Heart left ventricle (tissue), 16 donors: ENCODE measurements at regions of chr11 and their contacts with region 1.

Region 1: DNA sequence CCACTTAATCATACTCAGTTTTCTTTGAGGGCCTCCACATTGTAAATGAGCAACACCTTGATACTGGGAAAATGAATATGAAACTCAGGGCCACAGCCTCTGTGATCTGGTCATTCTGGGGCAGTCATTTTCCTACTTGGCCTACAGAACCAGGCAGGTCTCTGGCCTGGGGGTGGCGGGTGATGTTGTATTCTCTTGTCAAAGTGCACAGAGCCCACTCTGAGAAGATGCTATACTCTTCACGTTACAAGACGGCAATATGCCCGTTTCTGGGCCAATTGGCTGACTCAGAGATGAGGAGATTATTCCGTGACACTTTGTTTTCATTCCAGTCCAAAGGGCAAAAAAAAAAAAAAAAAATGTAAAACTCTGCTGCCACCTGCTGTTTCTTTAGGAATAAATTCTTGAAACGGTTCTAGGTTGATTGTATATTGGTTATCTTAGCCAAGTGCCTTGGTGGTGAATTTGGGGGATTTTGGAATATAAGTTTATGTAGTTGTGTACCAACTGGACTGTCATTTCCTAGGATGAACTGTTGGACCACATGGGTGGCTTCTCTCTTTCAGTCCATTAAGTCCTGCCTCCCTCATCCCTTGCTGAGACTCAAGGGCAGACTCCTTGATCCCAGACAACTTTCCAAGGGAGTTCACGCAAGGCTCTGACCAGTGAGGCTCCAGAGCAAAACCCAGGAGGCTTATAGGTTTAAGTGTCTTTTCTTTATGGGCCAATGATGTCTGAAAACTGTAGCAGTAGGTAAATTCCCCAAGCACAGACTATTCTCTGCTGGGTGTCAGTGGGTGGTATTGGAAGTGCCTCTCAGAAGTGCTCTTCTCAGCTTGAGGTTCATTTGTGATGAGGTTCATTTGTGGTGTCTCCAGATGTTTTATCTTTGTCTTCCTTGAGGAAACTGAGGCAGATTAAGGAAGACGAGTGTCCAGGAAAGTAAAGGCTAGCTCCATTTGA is 18.2 kb downstream of the ADM start:
- DNase-seq: peak in 2 of 5 donors; percentile 30 to 43
- ATAC-seq: peak; percentile 34 to 50 (median 38)
- H3K4me3 ChIP-seq: no peak overlapping the region
- H3K27ac ChIP-seq: peak overlapping the region in 4 of 12 donors; percentile 15 to 50 (median 24)
- H3K4me1 ChIP-seq: peaks cover 0 to 50% (median 26%) of the 10 kb centered on the region in 12 donors
- H3K27me3 ChIP-seq: no peaks in the 10 kb centered on the region
- CTCF ChIP-seq: peak; percentile 31 to 70 (median 55)
- POLR2A ChIP-seq: no peak

Region 2: GRCh38 chr11:9015677-9016076 is 1307.4 kb before region 1 on chr11:
- intact Hi-C with region 1: loop called in 1 of 10 experiments (anchors 10 kb)
- DNase-seq: peak in 4 of 5 donors; percentile 48 to 61 (median 56)
- ATAC-seq: peak; percentile 41 to 83 (median 64)
- H3K4me3 ChIP-seq: no peak overlapping the region
- H3K27ac ChIP-seq: no peak overlapping the region
- H3K4me1 ChIP-seq: peaks cover 0 to 28% (median 17%) of the 10 kb centered on the region in 12 donors
- H3K27me3 ChIP-seq: no peaks in the 10 kb centered on the region
- CTCF ChIP-seq: peak; percentile 55 to 83 (median 74)
- POLR2A ChIP-seq: no peak

Region 3: GRCh38 chr11:9613118-9613829 is 709.8 kb before region 1 on chr11:
- intact Hi-C with region 1: loop called in 2 of 10 experiments (anchors 10 kb)
- DNase-seq: peak; percentile 94 to 96 (median 95)
- ATAC-seq: peak; percentile 92 to 94 (median 94)
- H3K4me3 ChIP-seq: peak overlapping the region; percentile 16 to 69 (median 54)
- H3K27ac ChIP-seq: peak overlapping the region; percentile 95 to 100 (median 97)
- H3K4me1 ChIP-seq: peaks cover 0 to 28% (median 17%) of the 10 kb centered on the region in 12 donors
- H3K27me3 ChIP-seq: no peaks in the 10 kb centered on the region
- CTCF ChIP-seq: peak in 11 of 12 donors; percentile 91 to 99 (median 97)
- POLR2A ChIP-seq: peak in 1 of 2 donors; percentile 40

Region 4: DNA sequence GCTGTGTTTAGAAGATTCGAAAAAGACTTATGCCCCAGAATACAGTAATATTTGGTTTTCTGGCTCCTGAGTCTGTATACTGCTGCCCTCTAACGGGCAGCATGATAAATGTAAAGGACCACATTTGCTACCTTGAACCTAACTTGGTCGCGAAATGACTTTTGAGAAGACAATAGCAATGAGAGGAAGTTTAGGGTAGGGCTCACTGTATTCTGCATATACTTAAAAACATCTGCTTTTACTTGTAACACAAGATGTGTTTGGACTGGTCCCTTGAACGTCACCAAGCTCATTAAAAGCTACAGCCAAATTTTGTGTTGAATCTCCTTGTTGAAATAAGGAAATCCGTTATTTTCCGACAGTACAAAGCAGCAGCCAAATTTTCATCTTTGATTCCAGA is 350.1 kb before region 1 on chr11:
- intact Hi-C with region 1: loop called in 2 of 10 experiments (anchors 5 kb)
- DNase-seq: no peak
- ATAC-seq: peak; percentile 55 to 83 (median 68)
- H3K4me3 ChIP-seq: no peak overlapping the region
- H3K27ac ChIP-seq: no peak overlapping the region
- H3K4me1 ChIP-seq: peaks cover 0 to 21% (median 9%) of the 10 kb centered on the region in 12 donors
- H3K27me3 ChIP-seq: no peaks in the 10 kb centered on the region
- CTCF ChIP-seq: peak; percentile 50 to 83 (median 70)
- POLR2A ChIP-seq: no peak

Region 5: DNA sequence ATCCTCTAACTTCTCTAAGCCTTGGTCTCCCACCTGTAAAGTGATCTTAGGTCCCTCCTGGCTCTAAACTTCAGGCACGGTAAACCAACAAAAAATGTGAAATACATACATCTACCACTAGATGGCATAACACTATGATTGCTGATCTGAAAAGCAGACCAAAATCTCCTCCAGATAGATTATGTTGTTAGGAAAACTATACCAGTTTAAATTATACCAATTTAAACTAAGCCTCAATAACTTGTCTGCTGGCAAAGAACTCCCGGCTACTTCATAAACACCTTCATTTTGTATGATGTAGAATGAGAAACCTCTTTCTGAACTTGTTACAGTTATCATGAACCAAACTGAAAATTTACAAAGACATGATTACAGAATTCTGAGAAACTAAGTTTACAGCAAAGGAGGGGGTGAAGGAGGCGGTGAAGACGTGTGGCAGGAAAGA is 115.0 kb before region 1 on chr11:
- intact Hi-C with region 1: loop called in 1 of 10 experiments (anchors 5 kb)
- DNase-seq: no peak
- ATAC-seq: peak in 2 of 4 donors; percentile 46 to 54
- H3K4me3 ChIP-seq: no peak overlapping the region
- H3K27ac ChIP-seq: no peak overlapping the region
- H3K4me1 ChIP-seq: peaks cover 0 to 12% (median 3%) of the 10 kb centered on the region in 12 donors
- H3K27me3 ChIP-seq: no peaks in the 10 kb centered on the region
- CTCF ChIP-seq: peak; percentile 62 to 82 (median 74)
- POLR2A ChIP-seq: no peak

Region 6: DNA sequence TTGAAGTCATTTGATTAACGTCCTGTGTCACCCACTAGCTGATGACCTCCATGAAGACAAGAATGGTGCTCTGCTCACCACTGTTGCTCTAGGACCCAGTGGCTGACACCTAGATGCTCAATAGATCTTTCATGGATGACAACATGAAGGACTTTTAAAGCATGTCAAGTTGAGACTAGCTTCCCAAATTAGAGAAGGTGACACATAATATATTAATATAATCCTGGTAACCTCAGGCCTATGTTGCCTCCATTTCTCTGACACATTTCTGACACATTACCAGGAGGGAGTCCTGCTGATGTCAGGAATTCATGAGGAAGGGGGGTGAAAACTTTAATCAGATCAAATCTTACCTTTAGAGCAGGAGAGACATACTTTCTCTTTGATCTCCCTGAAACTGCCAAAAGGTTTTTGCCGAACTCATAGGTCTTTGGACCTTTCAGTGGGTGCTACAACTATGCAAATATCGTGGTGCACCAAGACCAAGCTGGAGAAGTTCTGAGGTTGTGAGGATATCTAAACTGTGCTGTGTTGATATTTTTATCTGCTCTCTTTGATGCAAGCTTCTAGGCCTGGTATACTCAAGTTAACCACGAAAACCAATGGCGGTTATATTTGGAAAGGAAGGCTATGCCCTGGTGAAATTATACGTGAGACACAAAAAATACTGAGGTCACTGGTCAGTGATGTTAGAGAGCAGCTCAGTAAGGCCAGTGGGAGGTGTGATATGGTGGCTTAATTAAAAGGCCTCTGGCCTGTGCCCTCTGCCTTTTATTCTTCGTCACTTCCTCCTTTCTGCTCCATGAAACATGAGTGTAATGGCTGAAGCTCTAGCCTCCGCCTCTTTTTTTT is 118.8 kb after region 1 on chr11:
- intact Hi-C with region 1: no loop called
- DNase-seq: no peak
- ATAC-seq: no peak
- H3K4me3 ChIP-seq: no peak overlapping the region
- H3K27ac ChIP-seq: no peak overlapping the region
- H3K4me1 ChIP-seq: peaks cover 0 to 16% (median 0%) of the 10 kb centered on the region in 12 donors
- H3K27me3 ChIP-seq: peaks cover 0 to 4% (median 0%) of the 10 kb centered on the region in 9 donors
- CTCF ChIP-seq: no peak
- POLR2A ChIP-seq: no peak

Region 7: DNA sequence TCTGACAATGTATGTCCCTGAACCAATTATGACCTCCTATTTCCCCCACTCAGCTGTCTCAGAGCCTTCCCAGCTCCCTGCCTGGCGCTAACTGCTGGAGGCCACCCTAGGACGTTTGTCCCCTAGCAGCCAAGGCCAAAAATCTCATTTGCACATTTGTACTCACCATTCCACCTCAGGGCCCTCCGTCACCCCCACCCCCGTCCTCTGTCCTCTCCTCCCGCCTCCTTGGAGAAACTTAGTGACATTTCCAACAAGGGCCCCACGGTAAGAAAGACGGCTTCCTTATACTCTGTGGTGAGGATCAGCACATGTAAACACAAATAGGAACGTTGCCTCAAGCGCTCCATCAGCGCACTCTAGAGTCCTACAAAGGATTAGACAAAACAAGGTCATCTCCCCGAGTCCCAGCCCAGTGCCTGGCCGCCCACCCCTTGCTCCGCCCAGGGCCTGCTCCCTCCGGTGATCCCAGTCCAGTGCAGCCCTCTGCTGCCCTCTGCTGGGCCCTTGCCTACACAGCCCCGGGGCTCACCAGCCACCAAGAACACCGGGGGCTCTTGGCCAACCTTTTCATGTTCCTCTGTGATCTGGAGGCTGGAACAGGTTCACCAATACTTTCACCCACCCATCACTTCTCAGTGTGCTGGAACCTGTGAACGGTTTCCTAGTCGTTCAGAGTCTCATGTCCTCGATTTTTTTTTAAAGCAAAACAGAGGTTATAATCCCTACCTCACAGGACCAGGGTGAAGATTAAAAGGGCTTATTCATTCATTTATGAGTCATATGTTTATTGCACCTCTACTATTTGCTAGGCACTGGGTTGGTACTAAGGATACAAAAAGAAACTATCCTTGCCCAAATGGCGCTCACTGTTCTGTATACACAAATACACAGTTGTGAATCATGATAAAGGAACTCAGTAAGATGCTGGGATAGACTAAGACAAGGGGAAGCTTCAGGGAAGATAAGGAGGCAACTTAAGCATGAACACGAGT is 412.7 kb after region 1 on chr11:
- intact Hi-C with region 1: loop called in 1 of 10 experiments (anchors 10 kb)
- DNase-seq: peak; percentile 93 to 98 (median 96)
- ATAC-seq: peak; percentile 99 to 100 (median 100)
- H3K4me3 ChIP-seq: peak overlapping the region in 10 of 12 donors; percentile 6 to 45 (median 28)
- H3K27ac ChIP-seq: peak overlapping the region in 10 of 12 donors; percentile 17 to 75 (median 66)
- H3K4me1 ChIP-seq: peaks cover 0 to 13% (median 5%) of the 10 kb centered on the region in 12 donors
- H3K27me3 ChIP-seq: no peaks in the 10 kb centered on the region
- CTCF ChIP-seq: peak; percentile 97 to 100 (median 99)
- POLR2A ChIP-seq: no peak

Region 8: DNA sequence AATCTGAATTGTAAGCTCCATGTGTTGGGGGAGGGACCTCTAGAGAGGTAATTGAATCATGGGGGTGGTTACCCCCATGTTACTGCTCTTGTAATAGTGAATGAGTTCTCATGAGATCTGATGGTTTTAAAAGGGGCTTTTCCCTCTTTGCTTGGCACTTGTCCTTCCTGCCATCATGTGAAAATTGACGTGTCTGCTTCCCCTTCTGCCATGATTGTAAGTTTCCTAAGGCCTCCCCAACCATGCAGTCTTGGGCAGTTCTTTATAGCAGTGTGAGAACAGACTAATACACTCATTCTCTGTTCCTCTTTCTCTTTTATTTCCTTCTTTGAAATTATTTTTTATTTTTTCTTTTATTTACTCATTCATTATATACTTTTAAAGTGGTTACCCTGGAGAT is 790.5 kb after region 1 on chr11:
- intact Hi-C with region 1: no loop called
- DNase-seq: no peak
- ATAC-seq: no peak
- H3K4me3 ChIP-seq: no peak overlapping the region
- H3K27ac ChIP-seq: no peak overlapping the region
- H3K4me1 ChIP-seq: no peaks in the 10 kb centered on the region
- H3K27me3 ChIP-seq: peaks cover 0 to 4% (median 0%) of the 10 kb centered on the region in 9 donors
- CTCF ChIP-seq: no peak
- POLR2A ChIP-seq: no peak